PC-9 (cell line): ENCODE measurements at regions of chr20 and their contacts with region 1.

Region 1: DNA sequence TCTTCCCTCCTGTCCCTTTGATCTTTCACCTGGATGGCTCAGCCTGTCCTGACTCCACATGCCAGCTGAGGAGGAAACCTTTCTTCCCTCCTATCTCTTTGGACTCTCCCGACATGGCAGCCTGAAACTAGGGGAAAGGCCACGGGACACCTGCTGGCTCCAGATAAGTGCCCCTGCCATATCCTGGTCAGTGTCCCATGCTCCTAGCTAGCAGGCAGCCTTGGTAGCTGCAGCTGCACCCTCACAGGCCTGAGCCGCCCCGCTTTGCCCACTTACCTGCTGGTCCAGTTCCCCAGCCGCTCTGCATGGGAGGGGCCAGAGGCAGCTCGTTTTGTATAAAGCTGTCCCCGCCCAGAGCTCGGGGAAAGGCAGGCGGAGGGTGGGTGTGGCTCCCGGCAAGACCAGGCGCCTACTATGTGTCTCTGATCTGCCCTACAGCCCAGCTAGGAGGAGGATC is 7.4 kb upstream of the SLC52A3 start:
- DNase-seq: peak; percentile 82 to 83
- H3K4me3 ChIP-seq: peak overlapping the region; percentile 11; the same call in 1 of the 2 replicates
- H3K27ac ChIP-seq: no peak overlapping the region
- H3K4me1 ChIP-seq: peaks cover 32% of the 10 kb centered on the region
- H3K27me3 ChIP-seq: no peaks in the 10 kb centered on the region
- CTCF ChIP-seq: no peak

Region 2: GRCh38 chr20:787825-788224 is 12.1 kb after region 1 on chr20:
- CTCF ChIA-PET with region 1: no interaction called
- POLR2A ChIA-PET with region 1: interaction called, 11 read pairs
- intact Hi-C with region 1: no loop called
- DNase-seq: no peak
- H3K4me3 ChIP-seq: no peak overlapping the region
- H3K27ac ChIP-seq: no peak overlapping the region
- H3K4me1 ChIP-seq: no peaks in the 10 kb centered on the region
- H3K27me3 ChIP-seq: peaks cover 35% of the 10 kb centered on the region
- CTCF ChIP-seq: no peak